Cardiac septum (tissue), 1 donor: ENCODE measurements at regions of chr3 and their contacts with region 1.

Region 1: GRCh38 chr3:141441381-141442364 is 45.2 kb upstream of the RASA2 start:
- DNase-seq: peak; percentile 89

Region 2: DNA sequence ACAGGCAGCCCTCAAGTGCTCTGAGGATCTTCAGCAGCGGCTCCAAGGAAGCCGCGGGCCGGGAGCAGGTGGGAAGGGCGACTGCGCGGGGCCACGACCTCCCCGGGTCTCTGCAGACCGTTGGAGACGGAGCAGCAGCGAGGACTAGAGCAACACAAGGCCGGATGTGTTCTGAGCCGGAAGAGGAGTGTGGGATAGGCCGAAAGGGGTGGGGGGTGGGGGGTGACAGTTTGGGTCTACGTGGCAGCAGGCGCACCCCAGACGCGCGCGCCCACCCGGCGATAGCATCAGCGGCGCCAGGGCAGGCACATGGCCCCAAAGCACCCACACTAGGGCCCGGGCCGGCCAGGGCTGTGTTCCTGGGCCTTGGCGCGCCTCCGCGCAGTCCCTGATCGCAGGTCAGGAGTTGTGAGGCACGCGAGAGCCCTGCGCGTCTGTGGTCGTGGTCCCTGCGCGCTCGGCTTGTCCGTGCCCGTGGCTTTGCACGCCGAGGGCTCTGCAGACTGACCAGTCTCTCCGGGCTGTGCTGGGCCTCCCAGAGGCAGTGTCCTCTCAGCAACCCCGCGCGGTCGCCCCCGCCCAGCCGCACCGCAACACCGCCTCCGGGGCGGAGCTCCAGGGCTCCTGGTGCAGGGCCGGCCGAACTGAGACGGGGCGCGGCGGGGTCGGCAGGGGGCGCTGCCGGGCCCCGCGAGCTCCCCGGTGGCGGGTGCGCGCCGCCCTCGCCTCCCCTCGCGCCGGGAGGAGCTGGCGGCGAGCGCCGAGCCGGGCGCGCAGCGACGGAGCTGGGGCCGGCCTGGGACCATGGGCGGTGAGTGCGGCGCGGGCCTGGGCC is 210.4 kb before region 1 on chr3 and contains the start of gene PXYLP1:
- intact Hi-C with region 1: loop called (anchors 10 kb)
- DNase-seq: peak; percentile 98
- total RNA-seq, gene PXYLP1: 38.8 TPM

Region 3: DNA sequence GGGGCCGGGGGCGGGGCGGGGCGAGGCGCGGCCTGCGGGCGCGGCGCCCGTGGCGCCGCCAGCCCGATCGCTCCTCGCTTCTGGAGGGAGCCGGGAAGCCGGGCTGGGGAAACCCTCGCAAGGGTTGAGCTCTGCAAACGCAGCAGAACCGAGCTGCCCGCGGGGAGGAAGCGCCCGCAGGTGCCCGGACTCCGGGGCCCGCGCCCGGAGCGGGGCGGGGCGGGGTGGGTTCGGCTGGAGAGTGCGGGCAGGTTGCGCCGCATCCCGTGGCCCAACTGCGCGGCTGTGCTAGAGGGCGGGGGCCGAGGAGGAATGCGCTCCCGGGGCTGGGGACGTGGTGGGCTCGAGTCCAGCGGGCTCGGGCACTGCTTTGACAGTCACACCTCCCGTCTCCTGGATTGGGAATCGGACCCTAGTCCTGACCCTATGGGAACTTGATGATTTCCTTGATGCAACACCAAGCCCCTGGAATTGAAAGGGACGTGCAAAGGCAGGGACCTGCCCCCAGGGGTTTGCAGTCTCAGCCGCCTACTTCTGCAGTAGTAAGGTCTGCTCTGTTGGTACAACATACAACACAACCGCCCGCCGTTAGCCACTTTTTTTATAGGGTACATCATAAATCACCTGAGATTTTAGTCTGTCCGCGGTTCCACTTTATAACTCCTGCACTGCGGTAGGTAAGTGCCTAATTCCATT is 39.0 kb before region 1 on chr3:
- intact Hi-C with region 1: loop called (anchors 2 kb)
- DNase-seq: peak; percentile 87

Region 4: DNA sequence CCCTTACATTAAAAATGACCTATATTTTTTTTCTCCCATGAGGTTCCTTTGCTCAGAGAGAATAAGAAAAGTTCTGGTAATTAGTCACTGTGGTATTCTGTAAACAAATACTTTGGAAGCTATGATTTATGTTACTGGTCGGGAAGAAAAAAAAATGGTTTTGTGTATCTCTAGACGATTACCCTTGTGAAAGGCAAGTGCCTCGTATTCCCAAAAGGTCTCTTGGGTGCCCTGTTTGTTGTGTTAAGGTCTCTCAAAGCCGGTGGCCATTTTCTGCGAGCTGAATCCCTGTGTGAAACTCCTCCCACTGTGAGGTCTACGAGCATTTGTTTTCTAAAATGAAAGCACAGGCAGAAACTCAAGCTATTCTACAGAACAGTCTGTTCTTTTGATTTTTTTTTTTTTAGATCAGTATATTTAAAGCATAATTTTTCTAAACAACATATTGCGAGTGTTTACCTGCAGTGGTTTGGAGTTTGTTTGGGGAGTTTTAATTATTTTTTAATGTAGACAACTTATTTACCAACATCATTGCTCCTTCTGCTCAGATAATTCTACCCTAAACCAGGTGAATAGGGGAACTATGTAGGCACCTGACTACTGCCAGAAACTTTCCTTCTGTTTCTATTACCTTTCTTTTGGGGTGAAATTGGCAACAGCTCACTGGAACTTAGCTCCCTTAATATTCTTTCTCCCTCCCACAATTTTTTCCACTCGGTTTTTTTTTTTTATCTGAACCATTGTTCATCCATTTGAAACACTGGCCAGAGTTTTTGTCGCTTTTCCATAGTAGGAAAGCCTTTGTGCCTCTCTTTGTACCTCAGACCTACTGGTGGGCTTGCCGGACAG is 29.4 kb before region 1 on chr3:
- intact Hi-C with region 1: loop called (anchors 1 kb)
- DNase-seq: no peak